ENCODE measurements at regions of chr19 and their contacts with region 1.

Region 1: DNA sequence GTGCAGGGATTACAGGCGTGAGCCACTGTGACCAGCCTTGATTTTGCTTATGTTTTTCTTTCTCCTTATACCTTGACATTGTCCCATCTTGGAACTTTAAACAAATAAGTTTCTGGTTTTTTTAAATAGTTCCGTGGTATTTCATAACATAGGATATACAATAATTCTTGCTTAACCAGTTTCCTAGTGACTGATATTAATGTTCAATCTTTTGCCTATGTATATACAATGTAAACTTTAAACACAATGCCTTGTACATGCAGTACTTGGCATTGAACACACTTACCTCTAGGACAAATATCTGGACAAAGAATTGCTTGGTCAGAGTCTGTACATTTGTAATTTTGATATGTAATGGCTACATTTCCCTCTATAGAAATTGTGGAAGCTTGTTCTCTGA is 24.4 kb upstream of the SPACA4 start:
- DNase-seq: no peak
- H3K4me3 Mint-ChIP-seq: no peak overlapping the region
- H3K27ac Mint-ChIP-seq: no peak overlapping the region
- H3K4me1 Mint-ChIP-seq: peaks cover 9% of the 10 kb centered on the region
- H3K27me3 Mint-ChIP-seq: peaks cover 26% of the 10 kb centered on the region
- CTCF ChIP-seq: no peak

Region 2: DNA sequence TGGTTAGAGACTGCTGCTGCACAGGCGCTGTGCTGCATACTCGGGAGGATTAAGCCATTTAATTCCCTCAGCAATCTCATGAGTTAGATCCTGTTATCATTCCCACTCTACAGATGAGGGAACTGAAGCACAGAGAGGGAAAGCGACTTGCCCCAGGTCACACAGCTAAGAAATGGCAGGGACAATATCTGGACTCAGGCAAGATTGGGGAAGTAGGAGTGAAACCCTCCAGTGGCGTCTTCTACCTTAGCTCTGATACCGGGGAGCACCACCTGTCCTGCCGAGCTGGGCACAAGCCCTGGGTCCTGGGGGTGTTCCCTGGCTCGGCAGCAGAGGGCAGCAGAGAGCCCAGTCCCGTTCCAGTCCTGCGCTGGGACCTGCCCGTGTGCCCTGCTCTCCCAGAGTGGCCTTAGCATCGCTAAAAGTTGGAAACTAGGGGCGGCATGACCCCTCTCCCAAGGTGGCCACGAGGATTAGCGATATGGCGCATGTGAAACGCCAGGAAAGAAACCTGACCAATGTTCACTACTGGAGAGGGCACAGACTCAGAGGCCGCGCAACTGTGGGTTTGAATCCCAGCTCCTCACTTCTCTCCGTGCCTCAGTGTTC is 92.5 kb before region 1 on chr19:
- CTCF ChIA-PET with region 1: interaction called, 45 read pairs
- intact Hi-C with region 1: loop called (anchors 5 kb)
- DNase-seq: peak; percentile 96
- H3K4me3 Mint-ChIP-seq: no peak overlapping the region
- H3K27ac Mint-ChIP-seq: no peak overlapping the region
- H3K4me1 Mint-ChIP-seq: peaks cover 42% of the 10 kb centered on the region
- H3K27me3 Mint-ChIP-seq: peaks cover 43% of the 10 kb centered on the region
- CTCF ChIP-seq: peak; percentile 91

Region 3: GRCh38 chr19:48506138-48506733 is 75.9 kb before region 1 on chr19:
- CTCF ChIA-PET with region 1: interaction called, 148 read pairs
- intact Hi-C with region 1: loop called (anchors 1 kb)
- DNase-seq: no peak
- H3K4me3 Mint-ChIP-seq: no peak overlapping the region
- H3K27ac Mint-ChIP-seq: no peak overlapping the region
- H3K4me1 Mint-ChIP-seq: peaks cover 13% of the 10 kb centered on the region
- H3K27me3 Mint-ChIP-seq: peaks cover 34% of the 10 kb centered on the region
- CTCF ChIP-seq: peak; percentile 60

Region 4: DNA sequence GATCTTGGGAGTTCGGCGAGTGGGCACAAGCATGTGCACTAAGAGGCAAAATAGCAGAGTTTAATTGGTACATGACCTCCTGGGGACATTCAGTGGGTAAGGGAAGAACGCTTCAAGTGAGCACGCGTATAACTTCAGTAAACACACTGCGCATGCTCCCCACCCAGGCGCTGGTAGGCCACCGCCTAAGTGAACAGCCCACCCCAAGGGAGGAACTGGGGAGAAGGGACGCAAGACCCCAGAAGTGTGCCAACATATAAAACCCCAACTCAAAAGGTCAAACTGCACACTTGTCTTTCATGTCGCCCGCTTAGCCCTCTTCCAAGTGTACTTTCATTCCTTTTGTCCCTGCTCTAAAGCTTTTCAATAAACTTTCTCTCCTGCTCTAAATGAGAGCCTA is 101.2 kb after region 1 on chr19:
- CTCF ChIA-PET with region 1: no interaction called
- intact Hi-C with region 1: no loop called
- DNase-seq: no peak
- H3K4me3 Mint-ChIP-seq: no peak overlapping the region
- H3K27ac Mint-ChIP-seq: no peak overlapping the region
- H3K4me1 Mint-ChIP-seq: peaks cover 15% of the 10 kb centered on the region
- H3K27me3 Mint-ChIP-seq: no peaks in the 10 kb centered on the region
- CTCF ChIP-seq: no peak